Adrenal gland (tissue), 19 donors: ENCODE measurements at regions of chr1 and their contacts with region 1.

Region 1: DNA sequence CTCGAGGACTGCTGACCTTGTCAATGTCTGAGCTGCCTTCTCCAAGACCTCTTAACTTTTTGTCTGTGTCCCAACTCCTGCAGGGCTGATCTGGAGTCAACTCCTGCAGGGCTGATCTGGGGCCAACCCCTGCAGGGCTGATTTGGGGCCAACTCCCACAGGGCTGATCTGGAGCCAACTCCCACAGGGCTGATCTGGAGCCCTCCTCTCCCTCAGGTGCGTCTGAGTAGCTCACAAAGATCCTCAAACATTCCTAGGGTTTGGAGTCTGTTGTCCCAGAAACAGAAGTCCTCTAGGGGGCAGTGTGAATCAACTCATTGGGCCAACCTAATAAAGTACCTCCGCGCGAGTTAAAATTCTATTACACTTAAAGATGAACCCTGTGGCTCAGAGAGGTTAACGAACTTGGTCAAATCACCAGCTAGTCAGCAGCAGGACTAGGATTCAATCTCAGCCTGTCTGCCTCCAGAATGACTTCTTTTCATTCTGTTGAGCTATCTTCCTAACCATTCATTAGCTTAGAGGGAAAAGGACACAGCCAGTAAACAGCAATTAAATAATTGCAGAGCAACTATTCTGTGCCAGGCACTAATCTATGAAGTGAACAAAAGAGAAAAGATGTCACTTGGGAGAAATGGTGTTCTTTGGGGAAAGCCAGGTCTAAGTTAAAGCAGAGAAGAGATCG is 17.2 kb upstream of the RLF start:
- DNase-seq: peak; percentile 50 to 76 (median 66)
- H3K4me3 ChIP-seq: no peak overlapping the region
- H3K27ac ChIP-seq: no peak overlapping the region
- H3K4me1 ChIP-seq: no peaks in the 10 kb centered on the region
- H3K27me3 ChIP-seq: peaks cover 4% of the 10 kb centered on the region
- CTCF ChIP-seq: peak; percentile 68 to 83 (median 74)
- POLR2A ChIP-seq: no peak

Region 2: GRCh38 chr1:40096977-40097782 is 46.9 kb before region 1 on chr1 and contains the start of gene PPT1:
- intact Hi-C with region 1: no loop called
- DNase-seq: peak; percentile 70 to 86 (median 76)
- H3K4me3 ChIP-seq: peak within 1 kb of the TSS in 3 of 4 donors; percentile 50 to 79 (median 71)
- H3K27ac ChIP-seq: peak within 1 kb of the TSS in 4 of 5 donors; percentile 35 to 81 (median 48)
- H3K4me1 ChIP-seq: peaks cover 0 to 11% of the 10 kb centered on the region in 2 donors
- H3K27me3 ChIP-seq: no peaks in the 10 kb centered on the region
- CTCF ChIP-seq: peak in 2 of 6 experiments; percentile 20
- POLR2A ChIP-seq: peak in 1 of 2 donors; percentile 44
- total RNA-seq, gene PPT1: 70.3 to 112 (median 78.4) TPM

Region 3: GRCh38 chr1:40210514-40211204 is 66.6 kb after region 1 on chr1:
- intact Hi-C with region 1: no loop called
- DNase-seq: no peak
- H3K4me3 ChIP-seq: no peak overlapping the region
- H3K27ac ChIP-seq: peak overlapping the region in 1 of 5 donors; percentile 2
- H3K4me1 ChIP-seq: peaks cover 0 to 16% of the 10 kb centered on the region in 2 donors
- H3K27me3 ChIP-seq: no peaks in the 10 kb centered on the region
- CTCF ChIP-seq: no peak
- POLR2A ChIP-seq: no peak

Region 4: DNA sequence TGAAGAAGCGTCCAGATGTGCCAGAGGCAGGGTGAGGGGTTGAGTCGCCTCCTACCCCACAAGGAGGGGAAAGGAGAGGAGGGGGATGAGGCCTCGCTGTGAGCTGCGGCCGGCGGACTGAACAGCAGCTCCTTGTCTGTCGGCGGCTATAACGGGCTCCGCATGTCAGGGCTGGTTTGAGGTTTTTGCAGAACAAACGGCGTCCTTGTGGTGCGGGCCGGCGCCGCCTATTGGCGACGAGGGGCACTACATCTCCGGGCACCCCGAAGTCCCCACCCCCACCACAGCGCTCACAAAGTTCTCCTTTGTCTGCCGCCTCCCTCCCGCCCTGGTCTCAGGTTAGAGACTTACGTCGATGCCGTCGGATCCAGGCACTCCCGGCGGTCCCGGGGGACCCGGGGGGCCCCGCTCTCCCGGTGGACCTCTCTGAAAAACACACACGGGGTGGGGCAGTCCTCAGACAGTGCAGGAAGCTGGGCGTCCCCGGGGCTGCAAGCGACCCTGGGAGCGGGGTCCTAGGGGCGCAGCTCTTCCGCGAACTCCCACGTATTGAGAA is 171.3 kb after region 1 on chr1:
- intact Hi-C with region 1: loop called in 1 of 2 experiments (anchors 10 kb)
- DNase-seq: peak; percentile 76 to 91 (median 84)
- H3K4me3 ChIP-seq: peak overlapping the region in 2 of 4 donors; percentile 45 to 67
- H3K27ac ChIP-seq: no peak overlapping the region
- H3K4me1 ChIP-seq: peaks cover 11 to 22% of the 10 kb centered on the region in 2 donors
- H3K27me3 ChIP-seq: peaks cover 19% of the 10 kb centered on the region
- CTCF ChIP-seq: peak; percentile 75 to 94 (median 86)
- POLR2A ChIP-seq: no peak

Region 5: DNA sequence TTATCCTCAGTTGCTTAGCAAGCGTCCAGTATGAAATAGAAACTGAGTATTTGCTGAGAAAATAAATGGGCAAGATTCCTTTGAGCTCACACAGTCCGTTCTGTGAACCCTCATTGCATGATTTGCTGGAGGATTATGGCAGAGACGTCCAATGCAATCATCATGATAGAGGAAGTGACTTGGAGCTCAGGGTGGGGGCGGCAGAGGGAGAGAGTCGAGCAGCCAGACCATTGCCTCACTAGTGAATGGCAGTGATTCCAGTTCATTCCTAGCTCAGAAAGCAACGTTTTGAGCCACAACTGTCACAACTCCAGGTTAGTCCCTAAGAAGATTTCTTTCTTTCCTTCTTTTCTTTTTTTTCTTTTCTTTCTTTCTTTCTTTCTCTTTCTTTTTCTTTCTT is 200.6 kb after region 1 on chr1:
- intact Hi-C with region 1: loop called in 1 of 2 experiments (anchors 5 kb)
- DNase-seq: peak in 6 of 7 donors; percentile 49 to 72 (median 56)
- H3K4me3 ChIP-seq: no peak overlapping the region
- H3K27ac ChIP-seq: peak overlapping the region in 1 of 5 donors; percentile 44
- H3K4me1 ChIP-seq: no peaks in the 10 kb centered on the region
- H3K27me3 ChIP-seq: no peaks in the 10 kb centered on the region
- CTCF ChIP-seq: no peak
- POLR2A ChIP-seq: no peak